HepG2 (cell line): ENCODE measurements at regions of chr14 and their contacts with region 1.

Region 1: GRCh38 chr14:38971255-38971921 is 131.6 kb downstream of the SEC23A start:
- DNase-seq: no peak
- ATAC-seq: peak; percentile 83
- H3K4me3 ChIP-seq: no peak overlapping the region
- H3K27ac ChIP-seq: no peak overlapping the region
- H3K4me1 ChIP-seq: no peaks in the 10 kb centered on the region; the same call in 1 of the 2 replicates
- H3K27me3 ChIP-seq: peaks cover 0 to 10% of the 10 kb centered on the region in 2 experiments; a peak in 1 of 5 replicates
- CTCF ChIP-seq: no peak
- EP300 ChIP-seq: no peak
- POLR2A ChIP-seq: no peak
- RAD21 ChIP-seq: no peak

Region 2: DNA sequence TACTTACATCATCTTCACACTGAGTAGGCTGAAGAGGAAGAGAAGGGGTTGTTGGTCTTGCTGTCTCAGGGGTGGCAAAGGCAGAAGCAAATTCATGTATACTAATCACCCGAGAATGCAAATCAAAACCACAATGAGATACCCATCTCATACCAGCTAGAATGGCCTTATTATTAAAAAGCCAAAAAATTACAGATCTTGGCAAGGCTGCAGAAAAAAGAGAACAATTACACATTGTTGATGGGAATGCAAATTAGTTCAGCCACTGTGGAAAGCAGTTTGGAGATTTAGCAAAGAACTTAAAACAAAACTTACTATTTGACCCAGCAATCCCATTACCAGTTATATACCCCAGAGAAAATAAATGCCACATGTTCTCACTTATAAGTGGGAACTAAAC is 23.2 kb before region 1 on chr14:
- CTCF ChIA-PET with region 1: no interaction called
- POLR2A ChIA-PET with region 1: no interaction called
- in situ Hi-C with region 1: no loop called
- intact Hi-C with region 1: loop called (anchors 2 kb)
- DNase-seq: no peak
- ATAC-seq: no peak
- H3K4me3 ChIP-seq: no peak overlapping the region
- H3K27ac ChIP-seq: no peak overlapping the region
- H3K4me1 ChIP-seq: no peaks in the 10 kb centered on the region
- H3K27me3 ChIP-seq: no peaks in the 10 kb centered on the region
- CTCF ChIP-seq: no peak
- EP300 ChIP-seq: no peak
- POLR2A ChIP-seq: no peak
- RAD21 ChIP-seq: no peak